ENCODE measurements at regions of chr2 and their contacts with region 1.

Region 1: DNA sequence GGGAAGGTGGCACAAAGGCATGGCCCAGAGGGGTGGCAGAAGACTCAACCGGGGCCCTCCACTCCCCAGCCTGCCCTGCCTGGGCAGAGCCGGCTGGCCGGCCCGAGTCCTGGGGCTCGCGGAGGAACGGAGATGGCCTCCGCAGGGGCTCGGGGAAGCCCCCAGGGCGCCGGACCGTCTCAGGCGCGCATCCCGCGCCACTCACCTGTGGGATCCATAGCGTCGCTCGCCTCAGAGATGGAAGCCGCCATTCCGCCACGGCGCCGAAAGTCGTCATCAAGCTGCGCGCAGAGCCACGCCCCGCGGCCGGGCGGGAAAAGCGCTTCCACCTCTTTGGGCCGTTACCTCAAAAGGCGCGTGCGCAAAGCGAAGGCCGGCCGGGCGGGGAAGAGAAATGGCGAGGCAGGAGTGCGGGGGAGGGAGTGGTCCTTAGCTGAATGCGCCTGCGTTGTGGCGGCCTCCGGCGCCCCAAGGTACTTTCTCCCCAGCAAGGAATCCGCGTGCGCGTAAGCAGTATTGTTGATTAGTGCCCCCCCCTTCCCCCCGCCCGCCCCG is at the start of gene SMPD4:
- DNase-seq: peak; percentile 96
- H3K4me3 ChIP-seq: peak within 1 kb of the TSS; percentile 96
- H3K27ac ChIP-seq: peak within 1 kb of the TSS; percentile 76
- H3K4me1 ChIP-seq: peaks cover 21% of the 10 kb centered on the region
- CTCF ChIP-seq: no peak
- total RNA-seq, gene SMPD4: 52.0 and 61.9 TPM in 2 replicates

Region 2: GRCh38 chr2:130135692-130136541 is 45.5 kb before region 1 on chr2:
- CTCF ChIA-PET with region 1: no interaction called
- POLR2A ChIA-PET with region 1: no interaction called
- intact Hi-C with region 1: no loop called
- DNase-seq: no peak
- H3K4me3 ChIP-seq: no peak overlapping the region
- H3K27ac ChIP-seq: no peak overlapping the region
- H3K4me1 ChIP-seq: no peaks in the 10 kb centered on the region
- CTCF ChIP-seq: no peak

Region 3: DNA sequence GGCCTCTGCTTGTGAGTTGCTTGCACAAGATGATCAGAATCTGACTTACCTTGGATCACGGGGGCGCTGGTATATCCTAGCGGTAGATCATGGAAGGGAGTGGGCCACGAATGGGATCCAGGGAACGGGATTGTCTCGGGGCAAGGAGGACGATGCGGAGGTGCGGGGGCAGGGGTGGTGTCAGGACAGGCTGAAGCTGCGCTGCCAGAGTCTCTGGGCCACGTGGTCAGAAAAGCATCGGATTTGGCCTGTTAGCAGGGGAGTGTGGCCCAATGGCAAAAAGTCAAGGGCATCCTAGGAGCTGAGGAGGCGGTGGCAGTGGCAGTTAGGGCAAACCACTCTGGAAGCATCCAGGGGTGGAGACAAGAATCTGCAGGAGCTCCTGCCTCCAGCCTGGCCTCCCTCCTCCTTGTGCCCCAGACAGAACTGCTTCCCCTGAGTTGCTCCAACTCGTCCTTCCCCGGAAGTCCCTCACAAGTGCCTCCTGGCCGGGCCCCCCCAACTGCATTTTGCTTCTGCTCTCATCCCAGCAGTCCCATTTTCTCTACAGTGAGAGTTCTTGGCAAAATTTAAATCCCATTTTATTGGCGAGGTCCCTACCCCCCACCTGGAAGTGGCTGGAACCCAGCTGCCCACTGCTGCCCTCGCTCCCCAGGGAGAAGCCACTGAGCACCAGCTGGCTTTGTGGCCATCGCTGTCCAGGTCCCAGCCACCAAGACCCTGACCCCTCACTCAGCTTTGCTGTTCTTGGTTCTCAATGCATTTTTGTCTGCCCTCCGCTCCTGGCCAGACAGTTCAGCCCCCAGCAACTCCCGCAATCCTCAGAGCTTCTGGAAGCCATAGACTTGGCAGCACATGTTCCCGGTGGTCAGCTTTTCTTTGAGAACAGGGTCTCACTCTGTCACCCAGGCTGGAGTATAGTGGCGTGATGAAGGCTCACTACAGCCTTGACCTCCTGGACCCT is 30.9 kb before region 1 on chr2:
- CTCF ChIA-PET with region 1: no interaction called
- POLR2A ChIA-PET with region 1: interaction called, 3 read pairs
- intact Hi-C with region 1: loop called (anchors 5 kb)
- DNase-seq: no peak
- H3K4me3 ChIP-seq: no peak overlapping the region
- H3K27ac ChIP-seq: no peak overlapping the region
- H3K4me1 ChIP-seq: peaks cover 2% of the 10 kb centered on the region
- CTCF ChIP-seq: no peak

Region 4: DNA sequence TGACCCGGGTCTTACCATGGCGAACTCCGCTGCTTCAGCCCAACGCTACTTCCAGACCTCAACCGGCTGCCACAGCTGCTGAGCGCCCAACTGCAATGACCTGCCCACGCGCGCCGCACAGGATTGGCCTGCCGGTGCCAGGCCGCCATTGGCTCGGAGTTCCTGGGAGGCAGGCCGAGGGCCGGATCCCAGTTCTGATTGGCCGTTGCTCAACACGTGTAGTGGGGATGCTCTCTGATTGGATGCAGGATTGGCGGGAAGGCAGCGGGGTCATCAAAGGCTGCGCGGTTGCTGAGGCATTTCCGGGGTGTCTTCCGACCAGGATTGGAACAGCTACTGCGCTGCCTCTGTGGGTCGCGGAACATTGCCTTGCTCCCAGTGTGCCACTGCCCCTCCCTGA is 16.9 kb after region 1 on chr2 and contains the start of gene TUBA3E:
- CTCF ChIA-PET with region 1: no interaction called
- POLR2A ChIA-PET with region 1: no interaction called
- intact Hi-C with region 1: no loop called
- DNase-seq: no peak
- H3K4me3 ChIP-seq: no peak within 1 kb of the TSS
- H3K27ac ChIP-seq: no peak within 1 kb of the TSS
- H3K4me1 ChIP-seq: no peaks in the 10 kb centered on the region
- CTCF ChIP-seq: no peak
- total RNA-seq, gene TUBA3E: not detected in 2 replicates

Region 5: GRCh38 chr2:130332271-130333073 is 151.1 kb after region 1 on chr2:
- CTCF ChIA-PET with region 1: interaction called, 3 read pairs
- POLR2A ChIA-PET with region 1: interaction called, 3 read pairs
- intact Hi-C with region 1: loop called (anchors 2 kb)
- DNase-seq: peak; percentile 78
- H3K4me3 ChIP-seq: no peak overlapping the region
- H3K27ac ChIP-seq: no peak overlapping the region
- H3K4me1 ChIP-seq: no peaks in the 10 kb centered on the region
- CTCF ChIP-seq: peak; percentile 98

Region 6: GRCh38 chr2:130385709-130386108 is 204.3 kb after region 1 on chr2:
- CTCF ChIA-PET with region 1: no interaction called
- POLR2A ChIA-PET with region 1: no interaction called
- intact Hi-C with region 1: loop called (anchors 5 kb)
- DNase-seq: peak; percentile 84
- H3K4me3 ChIP-seq: peak overlapping the region; percentile 21
- H3K27ac ChIP-seq: peak overlapping the region; percentile 100
- H3K4me1 ChIP-seq: peaks cover 90% of the 10 kb centered on the region
- CTCF ChIP-seq: no peak